ENCODE measurements at regions of chr2 and their contacts with region 1.

Region 1: DNA sequence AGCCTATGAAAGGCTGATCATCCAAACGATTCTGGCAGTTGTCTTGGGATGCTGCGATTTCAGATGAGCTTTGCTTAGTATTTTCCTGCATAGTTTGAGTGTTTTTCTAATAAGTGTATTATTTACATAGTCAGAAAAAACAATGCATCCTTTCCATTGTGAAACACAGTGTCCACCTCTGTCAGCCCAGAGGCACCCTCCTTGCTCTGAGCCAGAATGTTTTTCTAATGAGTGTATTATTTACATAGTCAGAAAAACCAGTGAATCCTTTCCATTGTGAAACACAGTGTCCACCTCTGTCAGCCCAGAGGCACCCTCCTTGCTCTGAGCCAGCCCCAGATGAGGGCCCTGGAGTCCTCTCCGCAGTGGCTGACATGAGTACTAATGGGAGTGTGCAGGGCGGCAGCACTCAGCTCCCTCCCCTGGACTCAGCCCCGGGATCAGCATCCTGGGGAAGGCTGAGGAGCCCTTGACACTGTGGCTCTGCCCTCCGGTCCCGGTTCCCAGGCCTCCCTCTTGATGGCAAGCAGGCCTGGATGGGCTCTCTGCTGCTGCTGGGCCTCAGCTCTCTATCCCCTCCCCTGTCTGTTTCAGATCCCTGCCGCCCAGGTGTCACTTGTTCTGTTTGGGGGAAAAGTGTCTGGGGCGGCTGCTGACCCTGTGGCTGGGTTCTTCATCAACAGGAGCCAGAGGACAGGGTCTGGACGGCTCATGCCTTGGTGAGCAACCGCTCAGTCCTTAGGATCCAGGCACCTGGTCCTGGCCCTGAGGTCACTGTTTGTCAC is 5.9 kb downstream of the MFSD2B start:
- DNase-seq: peak; percentile 98
- ATAC-seq: peak; percentile 95
- H3K4me3 ChIP-seq: peak overlapping the region; percentile 22 to 70 (median 27); a peak in 5 of 6 replicates
- H3K27ac ChIP-seq: peak overlapping the region; percentile 74
- H3K4me1 ChIP-seq: peaks cover 41% of the 10 kb centered on the region
- H3K27me3 ChIP-seq: no peaks in the 10 kb centered on the region
- CTCF ChIP-seq: peak; percentile 46
- EP300 ChIP-seq: peak; percentile 25 to 81; a peak in 3 of 4 replicates
- POLR2A ChIP-seq: peak; percentile 36 to 78; a peak in 2 of 4 replicates
- RAD21 ChIP-seq: peak; percentile 38

Region 2: GRCh38 chr2:23939987-23940717 is 75.6 kb before region 1 on chr2 and contains the start of gene UBXN2A:
- CTCF ChIA-PET with region 1: no interaction called
- POLR2A ChIA-PET with region 1: interaction called, 13 read pairs
- in situ Hi-C with region 1: no loop called
- intact Hi-C with region 1: no loop called
- DNase-seq: peak; percentile 69
- ATAC-seq: peak; percentile 80
- H3K4me3 ChIP-seq: peak within 1 kb of the TSS; percentile 87 to 96 (median 93)
- H3K27ac ChIP-seq: peak within 1 kb of the TSS; percentile 87
- H3K4me1 ChIP-seq: peaks cover 46% of the 10 kb centered on the region
- H3K27me3 ChIP-seq: peaks cover 0 to 3% of the 10 kb centered on the region in 2 experiments; a peak in 1 of 5 replicates
- CTCF ChIP-seq: no peak
- EP300 ChIP-seq: no peak
- POLR2A ChIP-seq: peak; percentile 81 to 84
- RAD21 ChIP-seq: peak; percentile 76
- total RNA-seq, gene UBXN2A: 20.9 and 29.6 TPM in 2 replicates

Region 3: GRCh38 chr2:24175631-24176187 is 160.0 kb after region 1 on chr2:
- CTCF ChIA-PET with region 1: no interaction called
- POLR2A ChIA-PET with region 1: no interaction called
- in situ Hi-C with region 1: no loop called
- intact Hi-C with region 1: no loop called
- DNase-seq: no peak
- ATAC-seq: peak; percentile 23; the same call in 1 of the 3 replicates
- H3K4me3 ChIP-seq: no peak overlapping the region
- H3K27ac ChIP-seq: no peak overlapping the region
- H3K4me1 ChIP-seq: no peaks in the 10 kb centered on the region
- H3K27me3 ChIP-seq: peaks cover 0 to 12% of the 10 kb centered on the region in 2 experiments; a peak in 2 of 5 replicates
- CTCF ChIP-seq: no peak
- EP300 ChIP-seq: no peak
- POLR2A ChIP-seq: no peak
- RAD21 ChIP-seq: no peak

Measured in HepG2 (cell line).